Mammary epithelial cell (primary cell): ENCODE measurements at regions of chr10 and their contacts with region 1.

Region 1: GRCh38 chr10:14971867-14972448 is 12.8 kb downstream of the MEIG1 start:
- DNase-seq: no peak
- H3K4me3 ChIP-seq: no peak overlapping the region
- H3K27ac ChIP-seq: no peak overlapping the region
- H3K4me1 ChIP-seq: no peaks in the 10 kb centered on the region
- H3K27me3 ChIP-seq: no peaks in the 10 kb centered on the region
- CTCF ChIP-seq: peak; percentile 18 to 57

Region 2: DNA sequence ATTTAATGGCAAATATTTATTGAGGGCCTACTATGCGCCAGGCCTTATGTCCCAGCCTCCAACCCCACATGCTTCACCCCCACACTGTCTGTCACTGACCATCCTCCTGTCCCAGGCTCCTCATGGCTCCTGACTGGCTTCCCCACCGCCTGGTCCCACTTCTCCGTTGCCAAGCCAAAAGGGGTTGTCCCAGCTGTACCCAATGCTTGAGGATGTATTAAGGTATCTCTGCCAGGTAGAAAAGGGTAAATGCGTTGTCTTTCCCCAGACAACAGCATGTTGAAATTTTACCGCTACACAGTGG is 472.4 kb before region 1 on chr10:
- CTCF ChIA-PET with region 1: no interaction called
- dilution Hi-C with region 1: no loop called
- in situ Hi-C with region 1: no loop called
- intact Hi-C with region 1: loop called (anchors 1 kb)
- DNase-seq: no peak
- H3K4me3 ChIP-seq: no peak overlapping the region
- H3K27ac ChIP-seq: no peak overlapping the region
- H3K4me1 ChIP-seq: no peaks in the 10 kb centered on the region
- H3K27me3 ChIP-seq: no peaks in the 10 kb centered on the region
- CTCF ChIP-seq: no peak

Region 3: GRCh38 chr10:14936584-14936983 is 35.4 kb before region 1 on chr10:
- CTCF ChIA-PET with region 1: no interaction called
- dilution Hi-C with region 1: no loop called
- in situ Hi-C with region 1: no loop called
- intact Hi-C with region 1: no loop called
- DNase-seq: no peak
- H3K4me3 ChIP-seq: no peak overlapping the region
- H3K27ac ChIP-seq: no peak overlapping the region
- H3K4me1 ChIP-seq: no peaks in the 10 kb centered on the region
- H3K27me3 ChIP-seq: no peaks in the 10 kb centered on the region
- CTCF ChIP-seq: no peak

Region 4: GRCh38 chr10:15027741-15028140 is 55.8 kb after region 1 on chr10:
- CTCF ChIA-PET with region 1: no interaction called
- dilution Hi-C with region 1: loop called (anchors 5 kb)
- in situ Hi-C with region 1: no loop called
- intact Hi-C with region 1: no loop called
- DNase-seq: no peak
- H3K4me3 ChIP-seq: no peak overlapping the region
- H3K27ac ChIP-seq: no peak overlapping the region
- H3K4me1 ChIP-seq: no peaks in the 10 kb centered on the region
- H3K27me3 ChIP-seq: no peaks in the 10 kb centered on the region
- CTCF ChIP-seq: no peak

Region 5: DNA sequence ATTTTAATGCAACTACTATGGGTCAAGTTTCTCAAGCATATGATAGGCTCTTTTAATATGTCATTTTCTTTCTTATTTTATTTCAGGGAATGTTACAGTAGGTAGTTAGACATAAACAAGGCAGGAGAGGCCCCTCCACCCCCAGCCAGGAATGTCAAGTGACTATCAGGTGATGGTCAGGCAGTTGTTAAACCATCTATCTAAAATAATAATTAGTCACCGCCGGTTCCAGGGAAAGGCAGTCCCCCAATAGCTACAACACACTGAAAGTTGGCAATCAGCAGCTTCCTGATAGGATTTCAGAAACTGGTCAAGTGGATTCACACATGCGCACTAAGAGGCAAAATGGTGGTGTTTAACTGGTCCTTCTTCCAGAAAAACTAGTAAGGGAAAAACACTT is 81.1 kb after region 1 on chr10:
- CTCF ChIA-PET with region 1: no interaction called
- dilution Hi-C with region 1: no loop called
- in situ Hi-C with region 1: no loop called
- intact Hi-C with region 1: no loop called
- DNase-seq: no peak
- H3K4me3 ChIP-seq: no peak overlapping the region
- H3K27ac ChIP-seq: no peak overlapping the region
- H3K4me1 ChIP-seq: no peaks in the 10 kb centered on the region
- H3K27me3 ChIP-seq: no peaks in the 10 kb centered on the region
- CTCF ChIP-seq: no peak

Region 6: DNA sequence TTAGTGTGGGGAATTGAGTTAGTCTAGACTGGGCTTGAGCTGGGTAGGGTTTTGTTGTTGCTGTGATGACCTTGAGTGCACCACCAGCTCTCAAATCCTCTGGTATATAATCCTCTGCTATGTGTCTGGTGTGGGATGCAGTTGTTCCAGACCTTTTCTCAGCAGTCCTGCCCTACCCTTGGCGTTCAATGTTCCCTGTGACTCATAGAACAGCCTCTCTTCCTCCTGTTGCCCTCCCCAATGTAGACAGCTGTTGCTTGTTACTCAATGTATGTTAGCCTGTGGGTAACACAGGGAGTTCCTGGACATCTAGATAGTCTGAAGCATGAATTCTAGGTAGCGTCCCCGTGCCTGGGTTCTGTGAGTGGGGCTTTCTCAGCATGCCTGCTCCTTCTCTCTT is 96.8 kb after region 1 on chr10:
- CTCF ChIA-PET with region 1: no interaction called
- dilution Hi-C with region 1: no loop called
- in situ Hi-C with region 1: no loop called
- intact Hi-C with region 1: no loop called
- DNase-seq: peak; percentile 58
- H3K4me3 ChIP-seq: no peak overlapping the region
- H3K27ac ChIP-seq: no peak overlapping the region
- H3K4me1 ChIP-seq: no peaks in the 10 kb centered on the region
- H3K27me3 ChIP-seq: no peaks in the 10 kb centered on the region
- CTCF ChIP-seq: no peak